ENCODE measurements at regions of chr20 and their contacts with region 1.

Region 1: DNA sequence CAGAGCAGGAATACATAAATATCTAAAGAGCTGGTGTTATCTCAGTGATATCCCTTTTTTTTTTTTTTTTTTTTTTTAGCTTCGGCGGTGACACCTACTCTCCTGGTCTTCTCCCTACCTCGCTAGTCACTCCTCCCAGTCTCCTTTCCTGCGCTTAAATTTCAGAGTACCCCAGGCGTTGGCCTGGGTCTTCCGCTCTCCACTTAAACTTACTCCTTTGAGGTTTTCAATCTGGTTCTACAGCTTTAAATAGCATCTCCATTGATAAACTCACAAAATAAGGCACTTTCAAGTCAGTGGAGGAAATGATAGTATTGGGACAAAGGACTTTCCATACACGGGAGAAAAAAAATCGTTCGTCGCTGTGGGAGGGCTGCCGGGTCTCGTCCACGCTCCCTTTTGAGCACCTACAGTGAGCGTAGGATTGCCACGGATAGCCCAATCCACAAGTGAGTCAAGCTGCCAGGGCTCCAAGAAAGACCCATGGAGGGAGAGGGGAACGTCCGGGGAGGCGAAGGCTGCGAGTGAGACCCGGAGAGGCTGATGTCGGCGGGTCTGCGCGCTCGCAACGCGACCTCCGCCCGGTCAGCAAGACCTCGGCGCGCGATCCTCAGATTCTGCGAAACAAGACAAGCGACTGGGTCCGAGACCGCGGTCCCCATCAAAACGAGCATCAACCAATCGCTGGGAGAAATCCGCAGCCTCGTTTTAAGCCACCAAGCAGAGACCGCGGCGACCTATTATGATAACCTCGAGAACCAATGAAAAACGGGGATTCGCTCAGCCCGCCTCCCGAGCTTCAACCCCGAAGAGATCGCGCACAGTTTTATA is 672 bp upstream of the SRSF6 start:
- DNase-seq: peak; percentile 95
- H3K4me3 ChIP-seq: peak overlapping the region; percentile 65 to 93
- H3K27ac ChIP-seq: peak overlapping the region; percentile 98 to 100
- H3K4me1 ChIP-seq: no peaks in the 10 kb centered on the region
- H3K27me3 ChIP-seq: no peaks in the 10 kb centered on the region
- CTCF ChIP-seq: no peak
- POLR2A ChIP-seq: no peak

Region 2: GRCh38 chr20:43210901-43211300 is 246.1 kb before region 1 on chr20:
- intact Hi-C with region 1: no loop called
- DNase-seq: no peak
- H3K4me3 ChIP-seq: no peak overlapping the region
- H3K27ac ChIP-seq: no peak overlapping the region
- H3K4me1 ChIP-seq: no peaks in the 10 kb centered on the region
- H3K27me3 ChIP-seq: no peaks in the 10 kb centered on the region
- CTCF ChIP-seq: no peak
- POLR2A ChIP-seq: no peak

Region 3: GRCh38 chr20:43590392-43591323 is 133.6 kb after region 1 on chr20 and contains the start of gene IFT52:
- intact Hi-C with region 1: loop called (anchors 5 kb)
- DNase-seq: peak; percentile 89
- H3K4me3 ChIP-seq: peak within 1 kb of the TSS; percentile 91 to 92
- H3K27ac ChIP-seq: peak within 1 kb of the TSS; percentile 79 to 80
- H3K4me1 ChIP-seq: no peaks in the 10 kb centered on the region
- H3K27me3 ChIP-seq: no peaks in the 10 kb centered on the region
- CTCF ChIP-seq: no peak
- POLR2A ChIP-seq: peak; percentile 53
- total RNA-seq, gene IFT52: 21.3 to 25.4 TPM

Region 4: GRCh38 chr20:44109951-44110361 is 652.9 kb after region 1 on chr20:
- intact Hi-C with region 1: loop called (anchors 10 kb)
- DNase-seq: no peak
- H3K4me3 ChIP-seq: no peak overlapping the region
- H3K27ac ChIP-seq: no peak overlapping the region
- H3K4me1 ChIP-seq: no peaks in the 10 kb centered on the region
- H3K27me3 ChIP-seq: no peaks in the 10 kb centered on the region
- CTCF ChIP-seq: no peak
- POLR2A ChIP-seq: no peak

Measured in prostate gland (tissue), 2 donors.